Activated CD4-positive, alpha-beta T cell treated with anti-CD3 and anti-CD28 coated beads, Interleukin-2, amount 10 ng/mL, durations not matched to agents 24 days and 14 days (primary cell): ENCODE measurements at regions of chr19 and their contacts with region 1.

Region 1: GRCh38 chr19:45439569-45440254 is 16.0 kb upstream of the ERCC1 start:
- DNase-seq: peak; percentile 95
- H3K4me3 Mint-ChIP-seq: peak overlapping the region; percentile 80
- H3K27ac Mint-ChIP-seq: peak overlapping the region; percentile 83
- H3K4me1 Mint-ChIP-seq: peaks cover 29% of the 10 kb centered on the region
- H3K27me3 Mint-ChIP-seq: peaks cover 5% of the 10 kb centered on the region

Region 2: GRCh38 chr19:45224645-45225044 is 215.1 kb before region 1 on chr19:
- intact Hi-C with region 1: no loop called
- DNase-seq: no peak
- H3K4me3 Mint-ChIP-seq: no peak overlapping the region
- H3K27ac Mint-ChIP-seq: no peak overlapping the region
- H3K4me1 Mint-ChIP-seq: no peaks in the 10 kb centered on the region
- H3K27me3 Mint-ChIP-seq: peaks cover 8% of the 10 kb centered on the region

Region 3: GRCh38 chr19:45413497-45413896 is 26.2 kb before region 1 on chr19:
- intact Hi-C with region 1: no loop called
- DNase-seq: no peak
- H3K4me3 Mint-ChIP-seq: no peak overlapping the region
- H3K27ac Mint-ChIP-seq: no peak overlapping the region
- H3K4me1 Mint-ChIP-seq: peaks cover 5% of the 10 kb centered on the region
- H3K27me3 Mint-ChIP-seq: no peaks in the 10 kb centered on the region

Region 4: DNA sequence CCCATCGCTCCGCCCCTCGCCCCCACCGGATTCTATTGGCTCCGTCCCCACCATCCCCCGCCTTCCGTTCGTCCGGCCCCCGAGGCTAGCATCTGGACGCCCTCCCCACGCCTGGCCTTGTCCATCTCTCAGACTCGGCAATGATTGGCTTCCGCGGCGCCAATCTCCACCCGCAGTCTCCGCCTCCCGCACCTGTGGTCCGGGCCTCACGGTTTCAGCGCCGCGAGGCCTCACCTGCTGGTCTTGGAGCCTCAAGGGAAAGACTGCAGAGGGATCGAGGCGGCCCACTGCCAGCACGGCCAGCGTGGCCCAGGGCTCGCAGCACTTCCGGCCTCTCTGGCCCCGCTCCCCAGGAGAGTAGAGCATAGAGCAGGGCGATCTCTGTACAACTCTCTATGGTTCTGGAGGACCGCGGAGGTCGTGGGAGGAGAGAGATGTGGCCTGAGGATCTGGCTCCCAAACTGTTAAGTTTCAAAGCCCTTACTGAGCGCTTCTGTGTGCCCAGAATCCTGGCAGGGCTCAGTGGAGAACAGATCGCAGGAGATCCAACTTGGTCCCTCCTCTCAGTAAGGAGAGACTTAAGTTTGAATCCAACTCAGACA is 16.0 kb before region 1 on chr19 and contains the start of gene ERCC1:
- intact Hi-C with region 1: loop called (anchors 1 kb)
- DNase-seq: peak; percentile 96
- H3K4me3 Mint-ChIP-seq: peak within 1 kb of the TSS; percentile 100
- H3K27ac Mint-ChIP-seq: peak within 1 kb of the TSS; percentile 98
- H3K4me1 Mint-ChIP-seq: peaks cover 55% of the 10 kb centered on the region
- H3K27me3 Mint-ChIP-seq: peaks cover 7% of the 10 kb centered on the region
- total RNA-seq, gene ERCC1: 123 and 124 TPM in 2 replicates

Region 5: GRCh38 chr19:45455707-45456499 is 16.2 kb after region 1 on chr19:
- intact Hi-C with region 1: loop called (anchors 1 kb)
- DNase-seq: peak; percentile 76
- H3K4me3 Mint-ChIP-seq: peak overlapping the region; percentile 65
- H3K27ac Mint-ChIP-seq: peak overlapping the region; percentile 76
- H3K4me1 Mint-ChIP-seq: peaks cover 29% of the 10 kb centered on the region
- H3K27me3 Mint-ChIP-seq: peaks cover 25% of the 10 kb centered on the region

Region 6: GRCh38 chr19:45478454-45479238 is 38.9 kb after region 1 on chr19:
- intact Hi-C with region 1: loop called (anchors 1 kb)
- DNase-seq: peak; percentile 97
- H3K4me3 Mint-ChIP-seq: peak overlapping the region; percentile 68
- H3K27ac Mint-ChIP-seq: peak overlapping the region; percentile 91
- H3K4me1 Mint-ChIP-seq: peaks cover 29% of the 10 kb centered on the region
- H3K27me3 Mint-ChIP-seq: peaks cover 32% of the 10 kb centered on the region